Dorsolateral prefrontal cortex (tissue), 120 donors: ENCODE measurements at regions of chr16 and their contacts with region 1.

Region 1: DNA sequence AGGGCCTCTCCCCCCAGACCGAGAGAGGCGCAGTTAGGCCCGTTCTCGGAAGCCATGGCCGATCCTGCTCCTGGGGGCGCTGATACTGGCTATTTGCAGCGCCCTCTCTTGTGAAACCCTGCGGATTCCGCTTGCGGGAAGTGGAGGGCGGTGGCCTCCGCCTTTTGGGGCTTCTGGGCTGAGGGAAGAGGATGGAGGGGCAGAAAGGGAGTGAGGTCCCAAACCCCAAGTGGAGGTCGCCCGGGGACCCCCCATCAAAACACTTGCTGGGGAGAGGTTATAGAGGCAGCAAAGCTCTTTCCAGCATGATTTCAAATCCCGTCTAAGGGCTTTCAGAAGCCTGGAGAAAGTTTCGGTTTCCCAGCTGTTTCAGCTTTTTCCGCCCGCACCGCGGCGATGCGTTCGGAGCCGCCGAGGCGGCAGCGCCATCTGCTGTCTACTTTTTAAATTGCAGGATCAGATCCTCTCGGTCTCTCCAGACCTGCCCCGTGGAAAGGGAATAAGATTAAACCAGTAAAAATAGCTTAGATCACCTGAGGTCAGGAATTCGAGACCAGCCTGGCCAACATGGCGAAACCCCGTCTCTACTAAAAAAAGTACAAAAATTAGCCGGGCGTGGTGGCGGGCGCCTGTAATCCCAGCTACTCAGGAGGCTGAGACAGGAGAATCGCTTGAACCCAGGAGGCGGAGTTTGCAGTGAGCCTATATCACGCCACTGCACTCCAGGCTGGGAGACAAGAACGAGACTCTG is 15.8 kb downstream of the SNX20 start:
- DNase-seq: peak in 9 of 10 donors; percentile 59 to 85 (median 73)
- H3K4me3 ChIP-seq: peak overlapping the region; percentile 13 to 70 (median 49)
- H3K27ac ChIP-seq: peak overlapping the region in 41 of 59 donors; percentile 5 to 86 (median 45)
- H3K27me3 ChIP-seq: no peaks in the 10 kb centered on the region
- CTCF ChIP-seq: peak; percentile 85 to 97 (median 94)

Region 2: GRCh38 chr16:50065624-50066481 is 599.5 kb before region 1 on chr16 and contains the start of gene HEATR3:
- intact Hi-C with region 1: loop called in 1 of 2 experiments (anchors 10 kb)
- DNase-seq: peak; percentile 82 to 94 (median 90)
- H3K4me3 ChIP-seq: peak within 1 kb of the TSS; percentile 67 to 100 (median 97)
- H3K27ac ChIP-seq: peak within 1 kb of the TSS; percentile 68 to 100 (median 98)
- H3K27me3 ChIP-seq: no peaks in the 10 kb centered on the region
- CTCF ChIP-seq: peak in 26 of 56 donors; percentile 2 to 40 (median 16)
- total RNA-seq, gene HEATR3: 11.3 to 36.1 (median 20.5) TPM

Region 3: GRCh38 chr16:50210266-50211038 is 454.9 kb before region 1 on chr16:
- intact Hi-C with region 1: loop called in 1 of 2 experiments (anchors 5 kb)
- DNase-seq: peak; percentile 58 to 84 (median 78)
- H3K4me3 ChIP-seq: peak overlapping the region in 3 of 59 donors; percentile 7 to 17 (median 13)
- H3K27ac ChIP-seq: peak overlapping the region in 48 of 59 donors; percentile 3 to 79 (median 49)
- H3K27me3 ChIP-seq: no peaks in the 10 kb centered on the region
- CTCF ChIP-seq: peak; percentile 20 to 90 (median 73)

Region 4: DNA sequence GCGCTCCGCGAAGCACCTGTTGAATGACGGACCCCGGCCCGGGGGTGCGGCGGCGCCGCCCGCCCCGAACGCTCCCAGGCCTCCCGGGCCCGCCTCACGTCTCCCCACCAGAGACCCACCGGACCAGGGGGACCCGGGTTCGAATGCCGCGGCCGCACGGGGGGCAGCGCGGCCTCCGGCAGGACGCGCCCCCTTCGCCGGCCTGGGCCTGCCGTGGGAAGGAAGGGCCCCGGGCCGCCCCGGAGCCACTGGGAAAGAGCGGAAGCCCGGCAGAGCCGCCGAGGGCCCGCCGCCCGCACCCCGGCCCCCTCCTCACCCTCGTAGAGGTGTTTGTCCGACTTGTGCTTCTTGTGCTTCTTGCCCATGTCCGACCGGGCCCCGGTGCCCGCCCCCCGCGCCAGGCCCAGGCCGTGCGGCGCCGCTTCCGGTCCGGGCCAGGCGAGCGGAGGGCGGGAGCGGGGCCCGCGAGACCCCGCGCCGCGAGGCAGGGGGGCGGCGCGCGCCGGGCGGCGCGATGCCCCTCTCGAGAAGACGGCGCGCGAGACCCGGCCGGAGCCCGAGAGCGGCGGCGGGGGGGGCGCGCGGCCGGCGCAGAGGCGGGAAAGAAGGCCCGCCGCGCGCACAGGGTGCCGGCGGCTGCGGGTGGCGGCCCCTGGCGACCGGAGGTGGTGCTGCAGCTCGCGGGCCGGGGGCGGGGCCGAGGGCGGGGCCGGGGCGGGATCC is 296.7 kb before region 1 on chr16 and contains the start of gene BRD7:
- intact Hi-C with region 1: loop called (anchors 2 to 5 kb)
- DNase-seq: peak in 6 of 10 donors; percentile 45 to 80 (median 57)
- H3K4me3 ChIP-seq: peak within 1 kb of the TSS; percentile 64 to 98 (median 90)
- H3K27ac ChIP-seq: peak within 1 kb of the TSS in 27 of 59 donors; percentile 1 to 85 (median 45)
- H3K27me3 ChIP-seq: no peaks in the 10 kb centered on the region
- CTCF ChIP-seq: peak in 35 of 56 donors; percentile 11 to 74 (median 53)
- total RNA-seq, gene BRD7: 39.0 to 87.8 (median 53.4) TPM

Region 5: DNA sequence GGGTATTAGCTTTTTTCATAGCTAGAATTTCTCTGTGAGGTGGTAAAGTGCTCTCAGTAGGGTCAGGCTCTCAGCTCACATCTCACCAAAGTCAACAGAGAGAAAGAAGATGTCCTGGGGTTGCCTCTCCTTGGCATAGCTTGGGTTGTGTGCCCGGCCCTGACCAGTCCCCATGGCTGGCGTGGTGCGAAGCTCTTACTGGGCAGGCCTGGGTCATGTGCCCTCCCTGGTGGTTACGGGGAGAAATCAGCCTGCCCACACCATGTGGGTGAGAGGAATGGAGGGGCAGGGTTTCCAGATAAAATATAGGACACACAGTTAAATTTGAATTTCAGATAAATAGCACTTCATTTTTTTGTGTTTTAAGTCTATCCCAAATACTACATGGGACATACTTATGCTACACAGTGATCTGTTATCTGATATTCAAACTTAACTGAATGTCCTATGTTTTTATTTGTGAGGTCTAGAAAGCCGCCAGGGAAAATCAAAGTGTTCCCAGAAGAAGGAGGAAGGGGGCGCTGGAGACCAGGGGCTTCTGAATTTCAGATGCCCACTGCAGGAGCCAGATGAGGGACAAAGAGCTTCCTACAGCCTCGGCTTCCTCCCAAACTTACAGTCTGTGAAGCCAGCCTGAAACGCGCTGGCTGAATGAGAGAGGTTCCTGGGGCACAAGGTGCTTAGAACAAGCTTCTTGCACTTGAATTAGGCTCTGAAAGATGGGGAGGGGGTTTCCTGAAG is 71.7 kb before region 1 on chr16:
- intact Hi-C with region 1: loop called in 1 of 2 experiments (anchors 5 kb)
- DNase-seq: no peak
- H3K4me3 ChIP-seq: no peak overlapping the region
- H3K27ac ChIP-seq: no peak overlapping the region
- H3K27me3 ChIP-seq: no peaks in the 10 kb centered on the region
- CTCF ChIP-seq: peak in 46 of 56 donors; percentile 11 to 66 (median 35)

Region 6: DNA sequence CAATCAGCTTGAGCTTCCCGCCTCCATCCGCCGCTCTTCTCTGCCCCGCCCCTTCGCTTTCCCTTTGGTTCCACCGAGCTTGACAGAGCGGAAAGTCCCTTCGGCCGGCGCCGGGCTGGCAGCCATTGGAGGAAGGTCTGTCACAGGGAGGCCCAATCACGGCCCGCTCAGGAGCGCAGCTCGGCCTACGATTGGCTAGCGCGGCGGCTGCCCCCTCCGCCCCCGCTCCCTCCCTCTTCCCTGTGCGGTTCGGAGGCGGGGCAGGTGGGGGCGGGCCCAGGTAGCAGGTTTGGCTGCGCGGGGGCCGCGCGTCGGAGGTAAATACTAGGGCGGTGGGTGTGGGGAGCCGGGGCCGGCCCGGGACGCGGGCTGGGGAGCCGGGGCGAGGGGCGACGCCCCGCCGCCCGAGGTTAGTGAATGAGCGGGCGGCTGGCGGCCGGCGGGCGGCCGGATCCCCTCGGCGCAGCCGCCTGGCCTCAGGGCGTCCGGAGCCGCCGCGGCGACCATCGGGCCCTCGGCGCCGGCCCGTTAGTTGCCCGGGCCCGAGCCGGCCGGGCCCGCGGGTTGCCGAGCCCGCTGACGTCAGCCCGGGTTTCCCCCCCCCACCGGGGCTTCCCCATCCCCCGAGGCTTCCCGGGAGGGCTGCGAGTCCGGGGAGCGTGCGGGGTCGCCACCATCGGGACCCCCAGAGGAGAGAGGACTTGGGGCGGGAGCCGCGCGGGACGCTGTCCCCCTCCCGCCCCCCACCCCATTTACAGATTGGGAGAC is 76.7 kb after region 1 on chr16 and contains the start of gene CYLD:
- intact Hi-C with region 1: loop called (anchors 5 kb)
- DNase-seq: peak; percentile 99 to 100 (median 100)
- H3K4me3 ChIP-seq: peak within 1 kb of the TSS; percentile 57 to 98 (median 86)
- H3K27ac ChIP-seq: peak within 1 kb of the TSS in 58 of 59 donors; percentile 30 to 97 (median 89)
- H3K27me3 ChIP-seq: no peaks in the 10 kb centered on the region
- CTCF ChIP-seq: peak in 14 of 56 donors; percentile 5 to 43 (median 21)
- total RNA-seq, gene CYLD: 58.7 to 116 (median 82.7) TPM